Uterus (tissue), 4 donors: ENCODE measurements at regions of chr21 and their contacts with region 1.

Region 1: DNA sequence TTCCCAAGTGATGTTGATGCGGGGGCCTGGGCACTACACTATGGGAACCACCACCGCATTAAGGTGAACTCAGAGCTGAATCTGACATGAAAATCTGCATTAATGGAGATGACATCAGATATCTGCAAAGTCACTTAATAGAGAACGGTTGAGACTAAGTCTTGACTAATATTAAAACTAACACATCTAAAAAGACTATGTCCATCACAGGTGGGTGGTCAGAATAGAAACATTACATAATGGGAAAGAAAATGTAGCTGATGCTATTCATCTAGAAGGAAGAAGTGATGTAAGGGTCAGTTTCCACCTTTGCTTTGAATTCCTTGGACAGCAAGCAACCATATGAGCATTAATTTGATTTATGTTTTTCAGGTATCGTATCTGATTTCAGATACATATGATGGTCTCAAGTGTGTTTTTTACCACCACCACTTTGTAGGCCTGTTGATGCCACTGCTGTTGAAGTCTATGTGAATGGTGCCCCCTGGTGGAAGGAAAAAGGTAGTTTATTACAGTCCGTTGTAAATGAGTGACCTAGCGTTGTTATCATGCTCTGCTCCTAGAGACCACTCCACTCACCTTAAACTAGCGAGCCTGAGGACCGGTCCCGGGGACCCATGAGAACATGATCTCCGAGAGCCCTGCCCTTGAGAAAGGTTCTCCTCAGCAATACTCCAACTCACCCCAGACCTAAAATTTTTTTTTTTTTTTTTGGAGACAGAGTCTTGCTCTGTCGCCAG is 73.5 kb downstream of the BACH1 start:
- DNase-seq: peak; percentile 33 to 74
- H3K4me3 ChIP-seq: no peak overlapping the region
- H3K27ac ChIP-seq: no peak overlapping the region
- H3K4me1 ChIP-seq: no peaks in the 10 kb centered on the region
- H3K27me3 ChIP-seq: no peaks in the 10 kb centered on the region
- CTCF ChIP-seq: peak; percentile 71 to 87 (median 78)
- POLR2A ChIP-seq: no peak

Region 2: DNA sequence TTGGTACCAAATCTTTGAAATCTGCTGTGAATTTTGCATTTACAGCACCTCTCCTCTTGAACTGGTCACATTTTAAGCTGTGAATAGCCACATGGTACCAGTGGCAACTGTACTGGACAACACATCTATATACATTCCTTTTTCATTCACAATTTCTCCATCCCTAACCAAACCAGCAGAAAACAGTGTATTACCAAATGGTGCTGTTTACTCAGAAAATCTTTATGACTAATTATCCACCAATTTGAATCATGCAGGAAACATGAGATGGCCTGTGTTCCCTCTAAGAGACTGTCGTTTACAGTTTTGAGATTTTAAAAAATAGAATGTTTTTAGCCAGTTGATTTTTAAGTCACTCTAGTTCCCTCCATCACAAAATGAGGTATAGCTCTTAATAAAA is 281.2 kb before region 1 on chr21:
- intact Hi-C with region 1: loop called (anchors 5 kb)
- DNase-seq: no peak
- H3K4me3 ChIP-seq: no peak overlapping the region
- H3K27ac ChIP-seq: no peak overlapping the region
- H3K4me1 ChIP-seq: no peaks in the 10 kb centered on the region
- H3K27me3 ChIP-seq: no peaks in the 10 kb centered on the region
- CTCF ChIP-seq: no peak
- POLR2A ChIP-seq: no peak

Region 3: GRCh38 chr21:29163341-29164115 is 208.7 kb before region 1 on chr21:
- intact Hi-C with region 1: loop called (anchors 2 kb)
- DNase-seq: no peak
- H3K4me3 ChIP-seq: no peak overlapping the region
- H3K27ac ChIP-seq: peak overlapping the region; percentile 31 to 33
- H3K4me1 ChIP-seq: no peaks in the 10 kb centered on the region
- H3K27me3 ChIP-seq: no peaks in the 10 kb centered on the region
- CTCF ChIP-seq: no peak
- POLR2A ChIP-seq: no peak